A549 (cell line): ENCODE measurements at regions of chr9 and their contacts with region 1.

Region 1: DNA sequence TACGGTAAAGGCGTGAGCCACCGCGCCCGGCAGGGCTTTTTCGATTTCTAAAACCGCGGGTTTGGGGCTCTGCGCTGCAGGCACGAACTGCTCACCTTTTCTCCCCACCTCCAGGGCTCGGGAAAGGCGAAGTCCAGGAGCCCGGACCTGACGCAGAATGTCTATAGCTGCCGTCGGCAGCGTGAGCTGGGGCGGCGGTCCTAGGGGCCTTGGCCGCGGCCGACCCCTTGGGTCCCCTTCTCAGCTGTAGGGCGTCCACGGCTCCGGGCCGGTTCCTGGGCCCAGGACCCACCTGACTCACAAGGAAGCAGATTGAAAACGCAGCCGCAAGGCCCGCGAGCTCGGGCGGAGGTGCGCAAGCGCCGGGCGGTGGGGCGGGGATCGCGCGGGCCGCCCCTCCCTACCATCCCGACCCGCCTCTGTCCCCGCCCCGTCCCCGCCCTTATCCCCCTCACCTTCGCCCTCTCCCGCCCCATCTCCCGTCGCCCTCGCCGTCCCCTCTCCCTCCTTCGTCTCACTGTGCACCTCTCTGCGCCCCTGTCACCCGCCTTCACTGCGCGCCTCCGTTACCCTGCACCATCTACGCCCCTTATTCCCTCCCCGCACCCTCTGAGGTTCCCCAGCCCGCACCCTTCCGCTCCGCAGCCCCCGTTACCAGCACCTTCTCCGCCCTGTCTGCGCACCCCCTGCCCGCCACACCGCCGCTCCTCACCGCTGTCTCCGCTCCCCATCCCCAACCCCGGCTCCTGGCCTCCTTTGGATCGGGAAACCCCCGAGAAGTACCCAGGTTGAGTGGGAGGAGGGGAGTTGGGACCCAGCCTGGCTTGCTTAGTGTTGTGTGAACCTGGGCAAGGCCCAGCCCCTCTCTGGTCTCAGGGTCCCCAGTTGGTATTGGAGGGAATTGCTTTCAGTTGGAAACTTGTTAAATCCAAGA is at the start of gene HDHD3:
- DNase-seq: peak; percentile 87 to 92
- ATAC-seq: peak; percentile 90 to 95
- H3K4me3 ChIP-seq: peak within 1 kb of the TSS; percentile 58
- H3K27ac ChIP-seq: peak within 1 kb of the TSS; percentile 81 to 93
- H3K4me1 ChIP-seq: peaks cover 8% of the 10 kb centered on the region; the same call in 2 of the 3 replicates
- CTCF ChIP-seq: no peak
- EP300 ChIP-seq: no peak
- POLR2A ChIP-seq: peak; percentile 82
- RAD21 ChIP-seq: no peak
- polyA plus RNA-seq, gene HDHD3: 17.5 and 22.2 TPM in 2 replicates

Region 2: DNA sequence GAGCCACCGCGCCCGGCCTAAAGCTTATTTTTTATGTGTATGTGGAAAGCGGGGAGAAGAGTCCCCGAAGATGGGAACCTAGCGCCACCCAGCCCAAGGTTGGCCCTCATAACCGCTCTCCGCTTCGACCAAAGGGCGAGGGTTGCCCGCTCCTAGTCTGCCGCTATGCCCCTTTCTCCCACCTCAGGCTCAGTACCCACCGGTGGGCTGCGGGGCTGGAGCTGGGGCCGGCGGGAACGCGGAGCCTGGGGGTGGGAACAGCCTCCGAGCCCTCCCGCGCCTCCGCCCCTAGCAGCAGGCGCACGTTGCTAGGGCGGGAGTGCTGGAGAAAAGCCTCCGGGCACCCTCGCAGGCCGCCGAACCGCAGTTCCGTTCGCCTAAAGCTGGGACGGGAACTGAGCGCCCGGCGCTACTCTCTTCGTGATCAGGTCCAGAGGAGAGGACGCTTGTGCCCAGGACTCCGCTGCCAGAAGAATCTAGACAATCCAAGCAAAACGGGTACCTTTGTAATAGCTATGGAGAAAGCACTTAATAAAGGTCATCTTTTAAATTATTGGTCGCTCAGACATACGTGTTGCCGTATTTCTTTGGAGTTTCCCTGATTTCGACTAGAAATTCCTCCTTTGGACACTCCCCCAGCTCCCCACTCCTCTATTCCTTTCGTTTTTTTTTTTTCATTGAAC is 36.7 kb before region 1 on chr9 and contains the start of gene WDR31:
- CTCF ChIA-PET with region 1: no interaction called
- POLR2A ChIA-PET with region 1: interaction called, 15 read pairs
- DNase-seq: peak; percentile 91 to 93
- ATAC-seq: peak; percentile 99
- H3K4me3 ChIP-seq: peak within 1 kb of the TSS; percentile 51
- H3K27ac ChIP-seq: peak within 1 kb of the TSS; percentile 69 to 91
- H3K4me1 ChIP-seq: 0 out of 3 replicates have a peak, but pooled peaks cover 4% of the 10 kb centered on the region
- CTCF ChIP-seq: no peak
- EP300 ChIP-seq: no peak
- POLR2A ChIP-seq: peak; percentile 68
- RAD21 ChIP-seq: peak; percentile 10 to 14; a peak in 2 of 5 replicates
- polyA plus RNA-seq, gene WDR31: 2.9 and 3.7 TPM in 2 replicates

Region 3: DNA sequence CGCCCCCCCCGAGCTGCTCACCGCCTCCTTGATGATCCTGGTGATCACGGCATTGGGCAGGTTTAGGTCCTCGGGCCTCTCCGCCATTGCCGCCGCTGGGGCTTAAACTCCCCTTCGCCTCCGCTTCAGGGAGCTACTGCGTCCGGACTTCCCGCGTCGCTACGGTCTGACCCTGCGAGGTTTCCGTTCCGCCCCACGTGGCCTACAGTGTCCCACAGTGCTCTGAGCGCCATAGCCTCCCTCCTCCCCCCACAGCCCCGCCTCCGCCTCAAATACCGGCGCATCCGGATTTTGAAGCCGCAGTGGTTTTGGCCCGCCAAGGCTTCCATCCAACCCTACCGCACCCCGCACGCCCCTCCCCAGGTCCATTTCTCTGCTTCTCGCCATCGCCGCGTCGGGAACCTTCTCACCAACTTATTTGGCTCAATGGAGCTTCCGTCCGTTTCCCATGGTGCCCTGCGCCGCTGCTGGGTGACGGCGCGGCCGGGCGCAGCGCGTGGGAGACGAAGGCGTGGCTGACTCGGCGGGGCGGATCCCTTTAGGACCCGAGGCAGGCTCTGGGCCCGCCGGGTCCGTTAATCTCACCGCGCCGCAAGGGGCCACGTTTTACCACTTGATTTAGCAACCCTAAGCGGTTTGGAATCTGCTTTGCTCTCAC is 33.4 kb after region 1 on chr9 and contains the starts of genes C9orf43 and POLE3:
- CTCF ChIA-PET with region 1: interaction called, 4 read pairs
- POLR2A ChIA-PET with region 1: interaction called, 12 read pairs
- DNase-seq: peak; percentile 90 to 97
- ATAC-seq: peak; percentile 97
- H3K4me3 ChIP-seq: peak within 1 kb of the TSS; percentile 70
- H3K27ac ChIP-seq: peak within 1 kb of the TSS; percentile 95 to 98
- H3K4me1 ChIP-seq: peaks cover 8% of the 10 kb centered on the region; the same call in 1 of the 3 replicates
- CTCF ChIP-seq: no peak
- EP300 ChIP-seq: no peak
- POLR2A ChIP-seq: peak; percentile 72
- RAD21 ChIP-seq: no peak
- polyA plus RNA-seq, gene C9orf43: 0.89 and 1.0 TPM in 2 replicates
- polyA plus RNA-seq, gene POLE3: 129 and 143 TPM in 2 replicates

Region 4: GRCh38 chr9:113622600-113623400 is 245.9 kb after region 1 on chr9:
- CTCF ChIA-PET with region 1: no interaction called
- POLR2A ChIA-PET with region 1: no interaction called
- DNase-seq: peak; percentile 60 to 74
- ATAC-seq: peak; percentile 80 to 82
- H3K4me3 ChIP-seq: no peak overlapping the region
- H3K27ac ChIP-seq: peak overlapping the region; percentile 30 to 77; a peak in 5 of 6 replicates
- H3K4me1 ChIP-seq: peaks cover 43% of the 10 kb centered on the region
- CTCF ChIP-seq: no peak
- EP300 ChIP-seq: no peak
- POLR2A ChIP-seq: no peak
- RAD21 ChIP-seq: no peak

Region 5: GRCh38 chr9:114008667-114009410 is 631.9 kb after region 1 on chr9:
- CTCF ChIA-PET with region 1: no interaction called
- POLR2A ChIA-PET with region 1: no interaction called
- DNase-seq: no peak
- ATAC-seq: no peak; a peak in 1 of 6 replicates
- H3K4me3 ChIP-seq: no peak overlapping the region
- H3K27ac ChIP-seq: no peak overlapping the region
- H3K4me1 ChIP-seq: no peaks in the 10 kb centered on the region
- CTCF ChIP-seq: no peak
- EP300 ChIP-seq: no peak
- POLR2A ChIP-seq: no peak
- RAD21 ChIP-seq: no peak